ENCODE measurements at regions of chr20 and their contacts with region 1.

Region 1: DNA sequence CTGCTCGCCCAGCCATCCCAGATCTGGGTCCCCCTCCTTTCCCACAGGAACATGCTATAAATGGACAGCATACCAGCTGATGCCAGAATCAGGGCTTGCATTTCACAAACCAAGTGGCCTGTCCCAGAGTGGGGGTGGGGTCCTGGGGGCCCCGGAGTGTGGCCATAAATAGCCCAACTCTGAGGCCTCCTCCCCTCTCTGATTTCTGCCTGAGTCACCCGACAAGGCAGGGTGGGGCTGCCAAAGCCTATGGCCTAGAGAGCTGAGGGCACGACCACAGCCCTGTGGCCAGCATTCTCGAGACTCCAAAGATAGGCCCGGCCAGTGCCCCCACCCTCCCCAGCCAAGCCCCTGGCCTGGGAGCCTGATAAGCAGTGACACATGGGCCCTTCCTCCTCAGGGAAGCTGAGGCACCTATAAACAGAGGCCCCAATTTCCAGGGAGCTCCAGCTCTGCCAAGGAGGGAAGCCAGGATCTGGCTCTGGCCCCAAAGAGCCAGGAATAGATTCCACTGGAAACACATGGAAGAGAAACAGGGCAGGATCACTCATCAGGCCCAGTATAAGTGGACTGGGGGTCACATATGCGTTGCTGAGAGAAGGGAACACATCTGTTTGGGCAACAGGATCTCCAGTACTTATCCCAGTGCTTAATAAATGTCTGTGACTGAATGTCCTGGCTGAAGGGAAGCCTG is 20.3 kb downstream of the SNTA1 start:
- DNase-seq: peak; percentile 90

Region 2: GRCh38 chr20:33433465-33434234 is 10.4 kb after region 1 on chr20:
- intact Hi-C with region 1: loop called (anchors 1 kb)
- DNase-seq: peak; percentile 85

Region 3: DNA sequence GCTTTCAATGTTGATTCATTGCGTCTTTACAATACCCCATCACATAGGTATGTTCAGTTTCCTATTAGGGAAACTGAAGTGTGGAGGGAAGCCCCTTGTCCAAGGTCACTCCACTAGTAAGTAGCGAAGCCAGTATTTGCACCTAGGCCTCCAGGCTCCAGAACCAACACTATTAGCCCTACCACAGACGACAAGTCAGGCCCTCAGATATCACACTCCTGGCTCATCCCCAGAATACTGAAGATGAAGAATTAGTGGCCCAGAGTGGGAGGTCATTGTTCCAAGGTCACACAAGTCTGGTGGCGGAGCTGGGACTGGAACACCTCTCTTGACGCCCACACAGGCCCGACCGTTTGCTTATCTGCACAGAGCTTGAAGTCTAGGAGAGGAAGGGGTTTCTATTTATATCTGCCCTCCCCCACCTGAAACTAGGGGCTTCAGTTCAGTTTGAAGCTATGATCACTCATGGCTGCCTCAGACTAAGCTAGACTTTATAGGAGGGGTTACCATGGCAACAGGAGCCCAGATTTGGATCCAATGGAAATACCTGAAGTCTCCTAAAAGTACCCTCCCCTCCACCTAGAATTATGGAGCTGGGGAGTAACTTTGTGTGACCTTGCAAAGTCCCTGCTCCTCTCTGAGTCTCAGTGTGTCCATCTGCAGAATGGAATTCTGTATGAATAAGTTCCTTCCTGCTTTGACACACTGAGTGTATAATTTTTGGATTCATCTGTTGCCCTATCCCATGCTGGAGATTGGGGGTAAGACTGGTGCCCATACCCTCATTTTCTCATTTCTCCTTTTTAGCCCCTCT is 18.1 kb after region 1 on chr20:
- intact Hi-C with region 1: loop called (anchors 2 kb)
- DNase-seq: no peak

Measured in cardiac septum (tissue), 1 donor.